GM10248 (cell line): ENCODE measurements at regions of chr1 and their contacts with region 1.

Region 1: GRCh38 chr1:183635606-183636333 is at the start of gene ARPC5:
- DNase-seq: peak; percentile 96
- CTCF ChIP-seq: no peak

Region 2: GRCh38 chr1:183331091-183331742 is 304.6 kb before region 1 on chr1:
- CTCF ChIA-PET with region 1: no interaction called
- POLR2A ChIA-PET with region 1: no interaction called
- DNase-seq: no peak
- CTCF ChIP-seq: no peak

Region 3: GRCh38 chr1:183622884-183623785 is 12.6 kb before region 1 on chr1:
- CTCF ChIA-PET with region 1: interaction called, 37 read pairs
- POLR2A ChIA-PET with region 1: no interaction called
- DNase-seq: peak; percentile 58
- CTCF ChIP-seq: peak; percentile 78

Region 4: DNA sequence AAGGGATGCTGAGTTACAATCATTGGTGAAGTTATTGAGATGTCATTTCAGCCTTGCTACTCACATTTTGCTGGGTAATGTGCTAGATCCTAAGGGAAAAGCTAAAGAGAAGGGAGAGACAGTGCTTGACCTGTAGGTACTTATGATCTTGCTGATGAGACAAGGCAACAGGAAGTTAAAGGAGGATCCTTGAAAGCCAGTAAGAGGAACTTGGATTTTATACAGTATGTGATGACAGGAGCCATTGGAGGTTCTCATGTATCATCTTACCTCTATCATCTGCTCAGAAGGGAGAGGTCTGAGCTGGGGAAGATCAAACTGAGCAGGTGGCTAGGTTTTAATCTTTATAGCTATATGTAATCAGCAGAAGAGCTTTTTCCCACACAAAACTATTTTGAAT is 11.0 kb after region 1 on chr1:
- CTCF ChIA-PET with region 1: interaction called, 42 read pairs
- POLR2A ChIA-PET with region 1: no interaction called
- DNase-seq: no peak
- CTCF ChIP-seq: no peak

Region 5: GRCh38 chr1:183730107-183730724 is 94.4 kb after region 1 on chr1:
- CTCF ChIA-PET with region 1: no interaction called
- POLR2A ChIA-PET with region 1: no interaction called
- DNase-seq: no peak
- CTCF ChIP-seq: no peak

Region 6: GRCh38 chr1:183804881-183805841 is 169.4 kb after region 1 on chr1 and contains the start of gene RGL1:
- CTCF ChIA-PET with region 1: no interaction called
- POLR2A ChIA-PET with region 1: no interaction called
- DNase-seq: peak; percentile 58
- CTCF ChIP-seq: no peak